Activated T-helper 1 cell treated with anti-CD3 and anti-CD28 coated beads, Interleukin-12 subunit alpha, Interleukin-12 subunit beta, Interleukin-2, Interleukin-4 antibody, amounts not matched to agents 30 ng/mL and 10 ng/mL and 1 ng/mL, durations not matched to agents 14 hours and 24 hours and 36 hours (primary cell): ENCODE measurements at regions of chr10 and their contacts with region 1.

Region 1: DNA sequence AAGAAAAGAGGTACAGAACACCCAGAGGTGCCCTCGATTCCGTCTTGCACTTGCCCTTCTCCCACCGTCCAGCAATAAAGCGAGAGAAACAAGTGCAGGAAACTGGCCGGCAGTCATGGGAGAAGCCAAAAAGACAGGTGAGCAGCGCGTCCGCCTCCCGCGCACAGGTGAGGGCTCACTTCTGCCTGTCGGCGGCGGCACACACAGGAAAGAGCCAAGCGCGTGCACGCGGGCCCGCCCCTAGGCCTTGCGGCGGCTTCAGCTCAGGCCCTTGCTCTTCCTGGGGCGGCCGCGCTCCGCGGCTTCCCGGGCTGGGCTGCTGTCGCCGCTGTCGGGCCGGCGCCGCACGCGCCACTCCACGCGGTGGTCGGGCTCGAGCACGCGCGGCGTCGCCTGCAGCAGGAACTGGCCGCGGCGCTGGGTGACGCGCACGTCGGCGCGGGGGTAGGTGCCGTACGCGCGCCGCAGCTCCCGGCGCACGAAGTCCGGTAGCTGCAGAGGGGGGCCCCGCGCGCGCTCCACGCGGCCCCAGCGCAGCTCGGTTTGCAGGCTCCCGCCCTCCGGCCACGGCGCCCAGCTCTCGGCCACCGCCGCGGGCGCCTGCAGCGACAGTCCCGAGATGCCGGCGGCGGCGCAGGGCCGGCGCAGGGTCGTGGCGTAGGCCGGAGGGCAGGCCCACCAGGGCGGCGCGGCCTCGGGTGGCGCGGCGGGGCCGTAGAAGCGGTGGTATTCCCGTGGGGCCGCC is 977 bp downstream of the C10orf95 start:
- DNase-seq: peak; percentile 88
- H3K4me3 Mint-ChIP-seq: peak overlapping the region; percentile 95
- H3K27ac Mint-ChIP-seq: peak overlapping the region; percentile 90
- H3K4me1 Mint-ChIP-seq: peaks cover 33% of the 10 kb centered on the region
- H3K27me3 Mint-ChIP-seq: no peaks in the 10 kb centered on the region

Region 2: DNA sequence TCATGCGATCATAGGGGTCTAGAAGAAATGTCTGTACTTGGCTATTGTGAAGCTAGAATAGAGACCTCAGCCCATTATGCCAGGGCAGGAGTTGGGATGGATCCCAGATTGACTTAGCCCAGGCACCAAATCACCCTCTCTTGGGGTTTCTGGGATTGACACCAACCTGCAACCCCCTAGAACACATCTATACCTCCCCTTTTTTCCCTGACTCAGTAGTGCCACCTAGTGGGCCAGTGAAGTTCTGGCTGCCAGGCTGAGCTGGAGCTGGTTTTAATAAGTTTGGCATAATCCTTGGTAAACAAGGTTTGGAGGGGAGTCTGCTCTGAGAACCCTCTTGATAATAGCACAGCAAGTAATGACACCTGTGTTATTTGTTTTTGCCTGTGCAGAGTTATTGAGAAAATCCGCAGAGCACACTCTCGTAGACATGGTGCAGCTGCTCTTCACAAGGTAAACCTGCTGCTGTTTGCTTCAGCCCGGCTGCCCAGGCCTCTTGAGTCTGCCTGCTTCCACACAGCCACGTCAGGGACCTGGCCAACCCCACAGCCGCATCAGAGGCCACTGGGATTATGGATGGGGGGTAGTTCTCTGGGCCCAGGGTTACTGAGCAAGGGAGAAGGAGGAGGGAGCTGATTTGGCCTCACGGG is 98.2 kb before region 1 on chr10:
- intact Hi-C with region 1: no loop called
- DNase-seq: peak; percentile 41
- H3K4me3 Mint-ChIP-seq: no peak overlapping the region
- H3K27ac Mint-ChIP-seq: no peak overlapping the region
- H3K4me1 Mint-ChIP-seq: no peaks in the 10 kb centered on the region
- H3K27me3 Mint-ChIP-seq: no peaks in the 10 kb centered on the region

Region 3: GRCh38 chr10:102399217-102400089 is 50.9 kb before region 1 on chr10:
- intact Hi-C with region 1: loop called (anchors 1 kb)
- DNase-seq: peak; percentile 86
- H3K4me3 Mint-ChIP-seq: peak overlapping the region; percentile 90
- H3K27ac Mint-ChIP-seq: peak overlapping the region; percentile 63
- H3K4me1 Mint-ChIP-seq: peaks cover 42% of the 10 kb centered on the region
- H3K27me3 Mint-ChIP-seq: no peaks in the 10 kb centered on the region

Region 4: DNA sequence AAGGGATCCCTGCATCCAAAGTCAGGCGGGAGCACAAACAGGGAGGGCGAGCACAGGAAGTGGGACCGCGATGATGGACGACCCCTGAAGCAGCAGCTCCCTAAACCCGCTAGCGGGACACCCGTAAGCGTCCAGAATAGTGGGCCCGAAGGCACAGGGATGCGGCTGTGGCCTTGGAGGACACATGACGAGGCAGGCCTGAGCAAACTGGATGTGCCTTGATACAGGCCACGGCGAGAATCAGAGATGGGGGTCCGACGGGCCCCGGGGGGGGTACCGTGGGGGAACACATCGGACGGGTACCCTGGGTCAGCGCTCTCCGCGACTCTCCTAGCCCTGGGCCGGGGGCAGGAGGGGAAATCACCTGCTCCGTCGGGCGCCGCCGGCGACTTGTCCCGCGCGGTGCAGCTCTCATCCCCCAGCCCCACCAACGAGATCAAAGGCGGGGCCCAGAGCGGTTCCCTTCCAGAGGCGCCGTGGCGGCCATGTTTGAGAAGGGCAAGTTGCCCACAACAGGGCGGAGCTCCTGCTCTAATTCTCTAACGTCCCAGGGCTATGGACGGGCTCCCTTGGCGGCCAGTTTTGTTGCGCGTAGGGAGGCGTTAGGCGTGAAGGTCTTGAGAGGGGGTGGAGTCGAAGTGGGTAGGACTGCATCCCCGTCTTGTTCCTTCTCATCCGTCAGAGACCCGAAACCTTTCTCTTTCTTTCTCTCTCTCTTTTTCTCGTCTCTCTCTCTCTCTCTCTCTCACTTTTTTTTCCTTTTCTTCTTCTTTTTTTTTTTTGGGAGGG is 18.0 kb before region 1 on chr10 and contains the start of gene CUEDC2:
- intact Hi-C with region 1: loop called (anchors 1 kb)
- DNase-seq: peak; percentile 95
- H3K4me3 Mint-ChIP-seq: peak within 1 kb of the TSS; percentile 95
- H3K27ac Mint-ChIP-seq: peak within 1 kb of the TSS; percentile 94
- H3K4me1 Mint-ChIP-seq: peaks cover 55% of the 10 kb centered on the region
- H3K27me3 Mint-ChIP-seq: no peaks in the 10 kb centered on the region
- total RNA-seq, gene CUEDC2: 59.0 and 59.4 TPM in 2 replicates

Region 5: DNA sequence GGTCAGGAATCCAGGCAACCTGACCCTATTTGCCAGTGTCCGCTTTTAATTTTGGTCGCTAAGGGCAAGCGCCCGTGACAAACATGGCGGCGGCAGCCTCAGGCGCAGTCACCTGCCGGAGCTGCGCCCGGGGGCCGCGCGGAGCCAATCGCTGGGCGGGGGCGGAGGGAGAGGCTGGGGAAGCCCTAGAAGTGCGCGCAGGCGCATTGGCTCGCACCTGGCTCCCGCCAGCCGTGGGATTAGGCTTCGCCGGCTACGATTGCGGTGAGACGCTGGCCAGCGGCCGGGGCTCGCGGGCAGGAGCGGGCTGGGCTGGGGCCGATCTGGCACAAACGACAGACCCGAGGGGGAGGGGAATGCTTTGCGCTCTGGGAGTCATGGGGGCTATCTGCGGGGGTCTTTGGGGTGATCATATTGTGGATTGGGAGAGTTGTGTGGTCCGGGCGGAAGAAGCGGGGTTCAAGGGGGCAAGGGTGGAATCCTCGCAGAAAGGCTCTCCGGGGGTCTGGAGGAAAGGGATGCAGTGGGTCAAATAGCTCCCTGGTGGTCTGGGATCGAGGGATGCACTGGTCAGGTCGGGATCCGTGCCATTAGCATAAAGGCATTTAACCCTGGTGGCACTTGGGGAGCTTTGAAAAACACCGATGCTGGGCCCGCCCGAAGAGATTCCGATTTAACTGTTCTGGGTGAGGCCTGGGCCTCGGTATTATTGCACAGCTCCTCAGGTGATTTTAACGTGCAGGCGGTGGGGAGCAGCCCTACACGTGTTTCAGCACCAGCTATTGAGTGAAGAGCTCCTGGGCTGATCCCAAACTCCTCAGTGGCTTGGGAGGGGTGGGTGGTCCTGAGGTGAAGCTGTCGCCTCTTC is 11.1 kb after region 1 on chr10:
- intact Hi-C with region 1: loop called (anchors 1 kb)
- DNase-seq: peak; percentile 91
- H3K4me3 Mint-ChIP-seq: peak overlapping the region; percentile 94
- H3K27ac Mint-ChIP-seq: peak overlapping the region; percentile 87
- H3K4me1 Mint-ChIP-seq: peaks cover 26% of the 10 kb centered on the region
- H3K27me3 Mint-ChIP-seq: peaks cover 1% of the 10 kb centered on the region

Region 6: DNA sequence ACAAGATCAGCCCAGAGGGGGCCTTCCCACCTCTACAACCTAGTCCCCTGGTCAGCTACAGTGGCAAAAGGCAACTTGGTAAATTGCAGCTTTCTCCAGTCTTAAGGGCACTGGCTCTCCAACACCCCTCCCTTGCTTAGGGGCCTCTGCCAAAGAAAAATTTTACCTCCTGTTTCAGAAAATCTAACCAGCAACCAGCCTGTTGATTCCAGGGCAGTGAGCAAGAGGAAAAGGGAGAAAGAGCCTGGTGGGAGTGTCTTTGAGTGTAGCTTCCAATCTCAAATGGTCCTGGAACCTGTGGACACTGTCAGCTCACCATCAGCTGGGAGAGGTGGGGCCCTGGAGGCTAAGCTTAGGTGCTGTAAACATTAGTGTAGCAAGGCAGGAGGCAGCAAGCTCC is 29.3 kb after region 1 on chr10:
- intact Hi-C with region 1: loop called (anchors 1 kb)
- DNase-seq: no peak
- H3K4me3 Mint-ChIP-seq: no peak overlapping the region
- H3K27ac Mint-ChIP-seq: no peak overlapping the region
- H3K4me1 Mint-ChIP-seq: peaks cover 7% of the 10 kb centered on the region
- H3K27me3 Mint-ChIP-seq: no peaks in the 10 kb centered on the region